ENCODE measurements at regions of chr12 and their contacts with region 1.

Region 1: GRCh38 chr12:47949441-47950308 is 13.7 kb upstream of the TMEM106C start:
- DNase-seq: peak; percentile 90

Region 2: DNA sequence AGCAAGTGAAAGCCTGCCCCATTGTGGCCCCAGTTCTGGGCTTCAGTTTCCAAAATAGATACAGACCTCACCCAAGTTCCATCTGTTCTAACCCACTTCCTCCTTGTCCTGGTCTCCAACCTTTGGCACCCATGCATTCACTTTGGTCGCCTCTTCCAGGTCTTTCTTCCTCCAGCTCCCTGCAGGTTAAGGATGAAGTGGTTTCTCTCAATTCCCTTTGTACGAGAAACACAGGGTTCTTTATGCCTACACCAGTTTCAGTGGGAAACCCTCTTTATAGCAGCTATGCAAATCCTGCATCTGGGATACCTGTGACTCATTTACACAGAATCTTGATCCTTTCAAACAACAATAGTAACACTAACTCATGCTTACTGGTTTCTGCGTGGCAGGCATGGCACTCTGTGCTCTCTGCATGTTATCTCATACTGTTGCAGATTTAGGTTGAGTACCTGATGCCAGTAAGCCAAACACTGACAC is 759.4 kb before region 1 on chr12:
- CTCF ChIA-PET with region 1: no interaction called
- POLR2A ChIA-PET with region 1: no interaction called
- DNase-seq: no peak

Region 3: DNA sequence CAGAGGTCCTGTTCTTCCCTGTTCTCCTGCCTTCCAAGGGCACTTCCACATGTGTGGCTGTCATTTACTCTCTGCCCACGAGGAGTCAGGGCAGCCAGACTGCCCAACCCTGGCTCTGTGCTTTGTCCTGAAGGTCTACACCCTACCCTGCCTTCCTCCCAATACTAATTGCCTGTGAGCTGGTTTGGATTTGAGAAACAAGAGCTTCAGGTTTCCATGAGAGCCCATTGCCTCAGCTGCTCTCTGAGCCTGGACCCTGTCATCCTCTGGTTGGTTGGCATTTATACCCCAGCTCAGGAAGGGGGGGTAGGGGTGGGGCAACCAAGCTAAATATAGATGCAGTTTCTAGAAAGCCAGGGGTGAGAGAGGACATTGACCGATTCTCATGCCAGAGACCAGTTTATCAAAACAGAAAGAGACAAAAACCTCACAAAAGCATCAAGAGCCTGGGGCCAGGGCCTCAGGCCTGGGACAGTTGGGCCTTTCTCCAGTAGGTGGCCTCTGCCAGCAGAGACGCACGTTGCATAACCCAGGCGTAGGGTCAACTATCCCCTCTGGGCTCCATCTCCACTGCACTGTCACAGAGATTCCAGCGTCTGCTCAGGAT is 79.4 kb before region 1 on chr12:
- CTCF ChIA-PET with region 1: interaction called, 10 read pairs
- POLR2A ChIA-PET with region 1: no interaction called
- DNase-seq: peak; percentile 55

Region 4: DNA sequence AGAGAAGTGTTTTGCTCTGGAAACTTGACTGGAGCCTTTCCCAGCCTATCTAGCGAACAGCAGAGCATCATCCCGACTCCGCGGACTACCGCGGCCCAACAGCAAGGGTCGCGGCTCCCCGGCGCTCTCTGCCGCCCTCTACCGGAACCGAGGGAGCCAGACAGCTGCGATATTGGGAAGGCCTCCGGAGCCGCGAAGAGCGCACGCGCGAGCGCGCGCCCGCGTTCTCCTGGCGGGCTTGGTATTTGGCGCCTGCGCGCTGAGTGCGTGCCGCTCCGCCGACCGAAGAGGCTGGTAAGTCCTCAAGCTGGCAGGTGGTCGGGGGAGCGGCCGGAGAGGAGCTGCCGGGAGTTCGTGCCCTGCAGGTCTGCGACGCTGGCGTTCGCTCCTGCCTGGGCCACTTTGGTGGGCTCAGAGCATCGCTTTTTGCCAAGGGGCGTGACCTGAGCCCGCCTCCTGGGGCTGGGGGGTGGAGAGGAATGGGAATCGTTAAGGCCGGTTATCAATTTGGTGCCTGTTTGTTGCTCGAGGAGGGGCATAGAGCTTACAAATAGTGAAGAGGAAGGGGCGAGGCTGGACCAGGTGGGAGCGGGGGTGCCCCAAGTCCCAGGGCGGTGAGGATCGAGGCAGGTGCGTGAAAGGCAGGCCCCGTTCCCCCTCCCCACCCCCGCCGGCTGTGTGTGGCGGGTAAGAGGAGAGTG is 13.8 kb after region 1 on chr12 and contains the start of gene TMEM106C:
- CTCF ChIA-PET with region 1: interaction called, 10 read pairs
- POLR2A ChIA-PET with region 1: interaction called, 7 read pairs
- DNase-seq: peak; percentile 99

Measured in HEK293T (cell line).